ENCODE measurements at regions of chrX and their contacts with region 1.

Region 1: DNA sequence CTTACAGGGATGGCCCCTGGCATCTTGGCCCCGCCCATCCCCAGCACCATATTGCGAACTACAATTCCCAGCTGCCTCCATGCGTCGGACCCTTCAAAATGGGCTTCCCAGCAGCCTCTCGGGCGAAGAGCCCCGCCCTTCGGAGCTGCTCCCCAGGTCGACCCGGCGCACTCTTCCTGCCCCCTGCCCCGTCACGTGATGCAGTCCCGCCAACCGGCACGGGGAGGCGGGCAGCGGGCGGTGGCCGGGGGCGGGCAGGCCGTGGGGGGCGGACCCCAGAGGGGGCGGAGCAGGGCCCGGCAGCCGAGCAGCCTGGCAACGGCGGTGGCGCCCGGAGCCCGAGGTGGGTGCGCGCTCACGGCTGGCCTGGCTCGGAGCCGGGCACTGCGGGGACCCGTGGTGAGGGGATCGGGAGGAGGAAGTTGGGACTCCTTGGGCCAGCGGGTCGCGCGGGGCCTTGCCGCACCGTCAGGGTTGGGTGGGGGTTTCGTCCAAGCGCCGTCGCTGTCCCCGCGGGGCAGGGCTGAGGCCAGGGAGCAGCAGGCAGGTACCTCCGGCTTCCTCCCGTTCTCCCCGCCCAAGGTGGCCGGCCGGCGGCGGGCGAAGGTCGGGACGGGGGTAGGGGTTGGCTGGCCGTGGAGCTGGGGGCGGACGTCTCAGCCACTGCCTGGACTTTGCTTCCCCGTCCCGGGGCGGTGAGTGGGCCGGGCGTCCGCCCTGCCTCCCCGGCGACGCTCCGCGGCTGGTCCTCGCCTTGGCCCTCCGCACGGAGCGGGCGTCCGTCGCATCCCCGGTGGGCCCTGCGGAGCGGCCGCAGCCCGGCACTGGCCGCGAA is at the start of gene MTM1:
- DNase-seq: peak; percentile 95
- H3K4me3 ChIP-seq: peak within 1 kb of the TSS; percentile 84
- H3K27ac ChIP-seq: peak within 1 kb of the TSS; percentile 47
- H3K4me1 ChIP-seq: peaks cover 46% of the 10 kb centered on the region
- CTCF ChIP-seq: no peak
- total RNA-seq, gene MTM1: 4.0 and 6.0 TPM in 2 replicates

Region 2: DNA sequence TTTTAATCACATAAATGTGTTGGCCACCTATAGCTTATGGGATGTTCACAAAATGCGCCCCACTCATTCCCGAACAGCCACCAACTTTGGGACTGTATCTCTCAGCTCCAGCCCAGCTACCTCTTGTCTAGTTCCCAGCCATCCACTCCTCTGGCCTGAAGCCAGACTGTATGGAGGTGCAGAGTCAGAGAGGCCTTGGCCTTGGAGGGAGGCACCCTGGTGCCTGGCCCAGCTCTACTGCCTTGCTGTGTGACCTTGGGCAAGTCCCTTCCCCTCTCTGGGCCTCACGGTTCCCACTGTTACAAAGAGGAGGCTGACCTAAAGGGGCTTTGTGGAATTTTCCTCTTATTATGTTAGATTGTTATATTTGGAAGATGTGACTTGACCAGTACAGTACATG is 191.5 kb before region 1 on chrX:
- CTCF ChIA-PET with region 1: no interaction called
- POLR2A ChIA-PET with region 1: no interaction called
- intact Hi-C with region 1: no loop called
- DNase-seq: no peak
- H3K4me3 ChIP-seq: no peak overlapping the region
- H3K27ac ChIP-seq: no peak overlapping the region
- H3K4me1 ChIP-seq: no peaks in the 10 kb centered on the region
- CTCF ChIP-seq: no peak

Region 3: GRCh38 chrX:150683536-150684146 is 115.1 kb after region 1 on chrX:
- CTCF ChIA-PET with region 1: no interaction called
- POLR2A ChIA-PET with region 1: no interaction called
- intact Hi-C with region 1: no loop called
- DNase-seq: peak; percentile 62
- H3K4me3 ChIP-seq: no peak overlapping the region
- H3K27ac ChIP-seq: no peak overlapping the region
- H3K4me1 ChIP-seq: peaks cover 10% of the 10 kb centered on the region
- CTCF ChIP-seq: peak; percentile 77

Region 4: GRCh38 chrX:150719621-150720020 is 151.1 kb after region 1 on chrX:
- CTCF ChIA-PET with region 1: no interaction called
- POLR2A ChIA-PET with region 1: no interaction called
- intact Hi-C with region 1: no loop called
- DNase-seq: no peak
- H3K4me3 ChIP-seq: no peak overlapping the region
- H3K27ac ChIP-seq: no peak overlapping the region
- H3K4me1 ChIP-seq: peaks cover 18% of the 10 kb centered on the region
- CTCF ChIP-seq: no peak

Region 5: DNA sequence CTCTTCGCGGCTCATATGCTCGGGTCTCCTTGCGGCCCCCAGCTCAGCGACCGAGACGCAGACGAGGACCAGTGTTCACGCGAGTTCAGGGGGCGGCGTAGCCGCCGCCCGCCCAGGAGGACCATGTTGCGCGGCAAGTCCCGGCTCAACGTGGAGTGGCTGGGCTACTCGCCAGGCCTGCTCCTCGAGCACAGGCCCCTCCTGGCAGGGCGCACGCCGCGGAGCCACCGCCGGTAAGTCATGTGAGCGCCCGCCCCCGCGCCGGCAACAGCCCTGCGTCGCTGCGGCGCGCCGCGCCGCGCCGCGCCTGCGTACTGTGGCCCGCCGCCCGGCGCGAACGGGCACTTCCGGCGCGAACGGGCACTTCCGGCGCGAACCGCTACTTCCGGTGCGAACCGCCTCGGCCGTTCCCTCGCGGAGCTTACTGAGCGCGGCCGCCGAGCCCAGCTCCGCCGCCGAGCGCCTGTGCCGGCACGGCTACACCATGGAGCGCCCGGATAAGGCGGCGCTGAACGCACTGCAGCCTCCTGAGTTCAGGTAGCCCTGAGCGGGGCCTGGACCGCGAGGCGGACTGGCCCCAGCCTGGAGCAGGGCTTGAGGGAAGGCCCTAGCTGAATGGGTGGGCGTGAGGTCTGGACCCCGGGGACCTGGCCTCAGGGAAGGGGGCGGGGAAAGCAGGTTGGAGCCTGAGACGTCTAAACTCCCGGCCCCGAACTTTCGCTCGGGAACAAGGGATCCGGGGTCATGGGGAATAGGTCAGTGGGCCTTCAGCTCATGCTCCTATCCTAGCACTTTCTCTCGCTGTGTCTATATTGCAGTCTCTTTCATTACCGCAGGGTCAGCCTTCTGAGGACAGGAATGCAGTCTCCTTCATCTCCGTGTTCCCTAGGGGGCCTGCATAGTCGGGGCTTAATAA is 828.5 kb after region 1 on chrX and contains the start of gene VMA21:
- CTCF ChIA-PET with region 1: no interaction called
- POLR2A ChIA-PET with region 1: no interaction called
- intact Hi-C with region 1: loop called (anchors 2 kb)
- DNase-seq: peak; percentile 83
- H3K4me3 ChIP-seq: peak within 1 kb of the TSS; percentile 98
- H3K27ac ChIP-seq: peak within 1 kb of the TSS; percentile 93
- H3K4me1 ChIP-seq: peaks cover 35% of the 10 kb centered on the region
- CTCF ChIP-seq: no peak
- total RNA-seq, gene VMA21: 26.1 and 33.7 TPM in 2 replicates

Measured in OCI-LY7 (cell line).